MCF 10A (cell line): ENCODE measurements at regions of chr1 and their contacts with region 1.

Region 1: GRCh38 chr1:163174524-163175437 is 27.9 kb downstream of the RGS5 start:
- DNase-seq: peak; percentile 73
- H3K4me3 Mint-ChIP-seq: peak overlapping the region; percentile 0
- H3K27ac Mint-ChIP-seq: no peak overlapping the region
- H3K4me1 Mint-ChIP-seq: peaks cover 19% of the 10 kb centered on the region
- H3K27me3 Mint-ChIP-seq: no peaks in the 10 kb centered on the region
- CTCF ChIP-seq: peak; percentile 95

Region 2: GRCh38 chr1:162854245-162854882 is 320.4 kb before region 1 on chr1:
- CTCF ChIA-PET with region 1: interaction called, 110 read pairs
- POLR2A ChIA-PET with region 1: interaction called, 4 read pairs
- intact Hi-C with region 1: loop called (anchors 1 kb)
- DNase-seq: peak; percentile 88
- H3K4me3 Mint-ChIP-seq: no peak overlapping the region
- H3K27ac Mint-ChIP-seq: no peak overlapping the region
- H3K4me1 Mint-ChIP-seq: peaks cover 32% of the 10 kb centered on the region
- H3K27me3 Mint-ChIP-seq: peaks cover 33% of the 10 kb centered on the region
- CTCF ChIP-seq: peak; percentile 71

Region 3: GRCh38 chr1:162892906-162893611 is 281.7 kb before region 1 on chr1:
- CTCF ChIA-PET with region 1: interaction called, 13 read pairs
- POLR2A ChIA-PET with region 1: no interaction called
- intact Hi-C with region 1: no loop called
- DNase-seq: peak; percentile 75
- H3K4me3 Mint-ChIP-seq: no peak overlapping the region
- H3K27ac Mint-ChIP-seq: no peak overlapping the region
- H3K4me1 Mint-ChIP-seq: peaks cover 14% of the 10 kb centered on the region
- H3K27me3 Mint-ChIP-seq: no peaks in the 10 kb centered on the region
- CTCF ChIP-seq: no peak

Region 4: GRCh38 chr1:162942916-162943567 is 231.7 kb before region 1 on chr1:
- CTCF ChIA-PET with region 1: interaction called, 10 read pairs
- POLR2A ChIA-PET with region 1: no interaction called
- intact Hi-C with region 1: loop called (anchors 1 kb)
- DNase-seq: peak; percentile 55
- H3K4me3 Mint-ChIP-seq: no peak overlapping the region
- H3K27ac Mint-ChIP-seq: no peak overlapping the region
- H3K4me1 Mint-ChIP-seq: peaks cover 11% of the 10 kb centered on the region
- H3K27me3 Mint-ChIP-seq: no peaks in the 10 kb centered on the region
- CTCF ChIP-seq: no peak

Region 5: GRCh38 chr1:163090321-163090945 is 84.3 kb before region 1 on chr1:
- CTCF ChIA-PET with region 1: interaction called, 14 read pairs
- POLR2A ChIA-PET with region 1: no interaction called
- intact Hi-C with region 1: no loop called
- DNase-seq: peak; percentile 51
- H3K4me3 Mint-ChIP-seq: no peak overlapping the region
- H3K27ac Mint-ChIP-seq: no peak overlapping the region
- H3K4me1 Mint-ChIP-seq: peaks cover 7% of the 10 kb centered on the region
- H3K27me3 Mint-ChIP-seq: no peaks in the 10 kb centered on the region
- CTCF ChIP-seq: no peak

Region 6: DNA sequence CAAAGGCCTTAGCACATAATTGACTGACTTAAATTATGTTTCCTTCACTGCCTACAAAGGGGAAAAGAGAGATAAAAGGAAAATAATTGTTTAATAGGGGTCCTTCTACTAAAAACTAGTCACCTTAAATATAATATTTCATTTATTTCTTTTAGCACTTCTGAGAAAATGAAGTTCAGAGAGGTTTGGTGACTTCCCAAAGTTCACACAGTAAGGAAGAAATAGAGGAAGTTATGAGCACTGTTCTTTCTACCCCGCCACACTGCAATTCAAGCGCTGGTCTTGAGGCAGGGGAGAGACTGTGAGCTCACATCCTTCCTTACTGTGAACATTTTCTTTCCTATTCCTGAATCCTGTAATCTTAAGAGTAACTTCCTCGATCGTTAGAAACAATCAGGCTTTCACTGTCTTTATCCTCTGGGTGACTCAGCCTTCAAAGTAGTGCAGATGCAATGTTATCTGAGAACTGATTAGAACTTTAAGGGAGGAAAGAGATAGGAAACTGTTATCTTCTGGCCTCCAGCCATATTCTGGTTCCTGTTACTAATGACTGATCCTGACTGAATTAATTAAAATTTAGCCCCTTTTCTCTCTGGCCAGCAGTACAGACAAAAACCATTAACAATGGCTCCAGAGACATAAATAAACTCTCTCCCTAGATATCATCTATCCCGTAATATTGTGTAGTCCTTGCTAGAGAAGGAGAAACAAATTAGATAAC is 21.1 kb after region 1 on chr1:
- CTCF ChIA-PET with region 1: interaction called, 25 read pairs
- POLR2A ChIA-PET with region 1: interaction called, 3 read pairs
- intact Hi-C with region 1: no loop called
- DNase-seq: no peak
- H3K4me3 Mint-ChIP-seq: no peak overlapping the region
- H3K27ac Mint-ChIP-seq: no peak overlapping the region
- H3K4me1 Mint-ChIP-seq: no peaks in the 10 kb centered on the region
- H3K27me3 Mint-ChIP-seq: no peaks in the 10 kb centered on the region
- CTCF ChIP-seq: no peak